AG04449 (cell line): ENCODE measurements at regions of chr15 and their contacts with region 1.

Region 1: DNA sequence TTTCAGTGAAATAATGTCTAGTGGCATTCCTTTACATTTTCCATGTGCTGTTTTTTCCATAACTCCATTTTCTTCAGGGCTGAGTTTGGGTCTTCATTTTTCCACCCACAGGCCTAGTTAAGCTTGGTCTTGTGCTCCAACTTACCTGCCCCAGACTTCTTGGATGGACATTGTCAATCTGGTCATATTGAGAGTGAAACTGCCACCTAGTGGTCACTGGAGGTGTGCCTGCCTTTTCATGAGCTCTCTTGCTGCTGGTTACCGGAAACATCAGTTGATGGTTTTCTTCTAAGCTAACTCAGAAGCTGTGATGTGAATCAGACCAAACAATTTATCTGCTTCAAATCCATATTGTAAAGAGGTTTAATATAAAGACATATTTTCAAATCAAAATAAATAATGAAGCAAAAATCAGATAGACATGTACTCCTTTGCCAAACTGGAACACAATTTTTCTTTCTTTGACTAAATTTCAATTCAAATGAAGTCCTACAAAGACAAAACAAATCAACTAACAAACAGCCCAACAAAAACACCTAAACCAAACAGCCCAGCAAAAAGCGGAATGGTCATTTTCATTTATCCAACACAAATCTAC is 135.1 kb upstream of the RASGRP1 start:
- DNase-seq: no peak
- H3K4me3 ChIP-seq: no peak overlapping the region
- CTCF ChIP-seq: peak; percentile 79

Region 2: GRCh38 chr15:38145651-38146111 is 554.1 kb before region 1 on chr15:
- CTCF ChIA-PET with region 1: no interaction called
- POLR2A ChIA-PET with region 1: no interaction called
- DNase-seq: no peak
- H3K4me3 ChIP-seq: no peak overlapping the region
- CTCF ChIP-seq: no peak

Region 3: DNA sequence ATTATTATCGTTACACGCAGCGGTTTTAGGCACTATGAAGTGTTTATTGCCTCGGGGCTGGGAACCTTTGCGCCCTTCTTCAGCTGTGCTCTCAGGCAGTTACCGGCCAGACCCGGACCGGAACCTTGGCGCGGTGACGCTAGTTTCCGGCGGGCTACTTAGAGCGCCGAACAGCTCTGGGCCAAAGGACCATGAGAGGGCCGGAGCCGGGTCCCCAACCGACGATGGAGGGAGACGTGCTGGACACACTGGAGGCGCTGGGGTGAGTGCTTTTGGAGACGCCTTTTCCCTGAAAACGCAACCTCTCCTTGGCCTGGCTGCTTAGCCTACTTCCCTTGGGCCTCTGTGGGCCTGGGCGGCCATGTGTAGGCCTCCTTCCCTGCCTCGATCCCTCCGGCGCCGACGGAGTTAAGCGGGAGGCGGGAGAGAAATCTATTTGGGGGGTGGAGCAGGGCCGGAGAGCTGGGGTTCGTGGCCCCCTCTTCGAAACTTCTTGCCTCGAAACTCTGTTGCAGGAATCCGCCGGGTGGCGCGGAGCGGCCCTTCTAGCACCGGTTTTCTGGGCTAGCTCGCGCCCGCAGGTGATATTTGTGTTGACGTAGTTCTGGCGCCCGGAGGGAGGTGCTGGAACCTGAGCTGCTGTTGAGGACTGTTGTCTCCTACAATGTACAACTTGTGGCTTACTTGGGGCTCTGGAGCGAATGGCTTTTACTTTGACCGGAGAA is 245.6 kb before region 1 on chr15 and contains the start of gene FAM98B:
- CTCF ChIA-PET with region 1: interaction called, 26 read pairs
- POLR2A ChIA-PET with region 1: no interaction called
- DNase-seq: no peak
- H3K4me3 ChIP-seq: peak within 1 kb of the TSS; percentile 97
- CTCF ChIP-seq: no peak

Region 4: DNA sequence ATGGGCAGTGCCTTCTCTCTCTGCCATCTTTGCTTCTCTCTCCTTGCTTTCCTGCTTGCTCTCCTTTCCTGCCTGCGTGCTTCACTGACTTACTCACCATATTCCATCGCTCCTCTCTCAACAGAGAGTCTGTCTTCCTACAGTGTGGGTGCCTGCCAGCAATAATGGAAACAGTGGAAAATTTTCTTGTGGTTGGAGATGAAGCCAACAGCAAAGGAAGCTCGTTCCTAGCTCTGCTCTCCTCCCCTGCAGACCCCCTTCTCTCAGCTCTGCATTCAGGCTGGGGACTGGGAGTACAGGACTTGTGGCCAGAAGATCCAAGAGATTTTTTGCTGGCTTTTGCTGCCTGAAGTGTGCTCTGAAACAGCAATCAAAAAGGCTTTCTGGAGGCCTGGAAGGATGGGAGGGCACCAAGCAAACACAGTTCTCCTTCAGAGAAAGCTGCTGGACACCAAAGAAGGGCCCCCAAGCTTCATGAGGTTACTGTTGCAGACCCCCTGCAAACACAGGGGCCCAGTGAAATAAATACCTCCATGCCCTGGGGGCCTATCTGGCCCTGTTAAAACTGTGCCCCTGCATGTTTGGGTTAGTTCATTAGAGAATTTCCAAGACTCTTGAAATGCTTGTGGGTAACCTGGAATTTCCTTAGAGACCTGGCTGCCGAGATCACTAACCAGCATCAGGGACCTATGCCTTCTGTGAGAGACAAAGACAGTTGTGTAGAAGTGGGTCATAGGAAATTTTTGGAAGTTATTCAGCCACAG is 14.8 kb after region 1 on chr15:
- CTCF ChIA-PET with region 1: interaction called, 27 read pairs
- POLR2A ChIA-PET with region 1: no interaction called
- DNase-seq: peak; percentile 99
- H3K4me3 ChIP-seq: no peak overlapping the region
- CTCF ChIP-seq: no peak